ENCODE measurements at regions of chr5 and their contacts with region 1.

Region 1: DNA sequence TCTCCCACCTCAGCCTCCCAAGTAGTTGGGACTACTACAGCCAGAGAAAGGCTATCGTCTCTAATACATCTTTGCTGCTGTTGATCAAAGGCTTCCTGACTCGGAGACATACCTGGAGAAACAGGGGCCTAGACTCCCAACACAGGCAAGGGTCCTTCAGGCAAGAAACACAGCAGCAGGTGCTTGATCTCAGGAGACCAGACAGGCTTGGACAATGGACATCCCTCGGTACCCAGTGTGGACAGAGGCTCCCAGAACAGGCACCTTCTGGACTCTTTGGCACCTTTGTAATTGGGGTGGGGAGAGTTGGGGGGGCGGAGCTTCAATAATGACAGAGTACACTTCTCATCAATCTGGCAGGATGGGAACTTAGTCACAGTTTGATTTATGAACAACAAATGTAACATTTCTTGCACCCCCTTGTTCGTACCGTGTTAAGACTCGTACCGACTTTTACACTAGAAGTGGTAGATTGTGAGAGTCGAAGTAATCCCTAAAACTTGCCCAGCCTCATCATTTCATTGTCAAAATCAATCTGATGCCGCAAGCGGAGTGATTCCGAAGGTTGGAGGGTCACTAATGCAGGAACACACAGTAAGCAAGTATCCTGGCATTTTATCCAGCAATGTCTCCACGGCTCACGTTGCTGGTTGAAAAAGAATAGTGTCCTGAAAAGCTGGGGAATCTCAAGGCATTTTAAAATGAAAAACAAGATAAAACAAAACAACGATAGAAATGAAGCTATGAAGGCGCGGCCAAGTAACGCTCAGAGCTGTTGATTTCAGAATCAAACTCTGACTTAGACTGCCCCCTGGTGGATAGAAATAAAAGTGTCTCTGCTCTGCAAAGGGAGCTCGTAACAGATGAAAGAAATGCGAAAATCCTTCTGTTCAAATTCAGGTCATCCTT is 46.4 kb upstream of the STK32A start:
- DNase-seq: no peak
- H3K4me3 ChIP-seq: no peak overlapping the region
- CTCF ChIP-seq: peak; percentile 57

Region 2: DNA sequence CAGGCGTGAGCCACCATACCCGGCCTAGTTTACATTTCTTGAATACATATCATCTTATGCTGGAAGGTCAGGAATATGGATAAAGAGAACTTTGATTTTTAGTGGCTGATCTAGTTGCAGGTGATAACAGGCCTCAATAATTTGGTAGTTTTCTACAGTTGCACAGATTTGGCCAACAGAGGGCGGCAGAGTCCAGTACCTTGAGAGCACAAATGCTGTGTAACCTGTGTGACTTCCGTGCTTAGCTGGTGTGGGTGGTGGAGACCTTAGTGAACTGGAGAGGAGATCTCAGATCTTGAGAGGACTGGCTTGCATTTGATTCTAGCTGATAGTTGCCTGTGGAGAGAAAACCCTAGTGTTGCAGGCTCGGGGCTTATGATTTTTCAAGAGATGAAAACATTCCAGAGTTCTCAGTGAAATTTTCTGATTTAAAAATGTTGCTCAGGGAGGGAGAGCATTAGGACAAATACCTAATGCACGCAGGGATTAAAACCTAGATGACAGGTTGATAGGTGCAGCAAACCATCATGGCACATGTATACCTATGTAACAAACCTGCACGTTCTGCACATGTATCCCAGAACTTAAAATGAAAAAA is 655.1 kb before region 1 on chr5:
- CTCF ChIA-PET with region 1: interaction called, 125 read pairs
- POLR2A ChIA-PET with region 1: no interaction called
- DNase-seq: no peak
- H3K4me3 ChIP-seq: no peak overlapping the region
- CTCF ChIP-seq: peak; percentile 82

Region 3: DNA sequence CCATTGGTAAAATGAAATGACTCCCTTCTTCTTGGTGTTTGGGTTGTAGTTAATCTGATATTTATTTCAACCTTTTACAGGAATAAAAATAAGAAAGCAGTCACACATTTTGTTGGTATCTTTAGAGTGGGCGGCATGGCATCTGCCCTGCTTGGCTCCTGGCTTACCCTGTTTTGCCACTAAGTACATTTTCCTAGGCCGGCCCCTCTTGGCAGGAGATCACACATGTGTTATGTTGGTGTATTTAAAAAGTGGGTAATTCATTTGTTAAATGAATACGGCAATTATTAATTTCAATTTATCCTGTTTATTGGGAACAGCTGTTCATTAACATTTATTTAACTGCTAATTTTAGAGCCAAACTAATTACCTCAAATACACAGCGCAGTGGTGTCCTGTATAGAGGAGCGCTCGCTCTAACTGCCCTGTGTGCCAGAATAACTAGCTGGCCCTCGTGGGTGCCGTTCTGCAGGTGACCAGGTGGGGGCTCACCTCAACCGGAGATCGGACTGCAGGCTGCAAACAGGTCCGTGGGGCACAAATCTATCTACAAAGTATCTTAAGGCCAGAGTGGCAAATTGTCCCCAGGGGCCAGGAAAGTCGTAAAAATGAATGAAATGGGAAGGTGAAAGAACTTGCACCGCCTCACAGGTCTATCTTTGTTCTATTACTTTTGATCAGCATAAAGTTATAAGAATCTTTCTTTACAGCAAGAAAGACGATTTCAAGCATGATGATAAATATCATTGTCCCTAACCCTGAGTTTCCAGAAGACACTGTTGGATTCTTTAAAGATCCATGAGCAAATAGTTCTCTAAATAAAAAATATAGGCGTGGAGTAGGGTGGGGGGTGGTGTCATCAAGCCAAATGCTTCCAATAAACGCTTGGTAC is 646.2 kb before region 1 on chr5:
- CTCF ChIA-PET with region 1: interaction called, 50 read pairs
- POLR2A ChIA-PET with region 1: no interaction called
- DNase-seq: no peak
- H3K4me3 ChIP-seq: no peak overlapping the region
- CTCF ChIP-seq: peak; percentile 92

Region 4: GRCh38 chr5:147098233-147098790 is 90.1 kb before region 1 on chr5:
- CTCF ChIA-PET with region 1: interaction called, 155 read pairs
- POLR2A ChIA-PET with region 1: no interaction called
- DNase-seq: no peak
- H3K4me3 ChIP-seq: no peak overlapping the region
- CTCF ChIP-seq: peak; percentile 24

Region 5: DNA sequence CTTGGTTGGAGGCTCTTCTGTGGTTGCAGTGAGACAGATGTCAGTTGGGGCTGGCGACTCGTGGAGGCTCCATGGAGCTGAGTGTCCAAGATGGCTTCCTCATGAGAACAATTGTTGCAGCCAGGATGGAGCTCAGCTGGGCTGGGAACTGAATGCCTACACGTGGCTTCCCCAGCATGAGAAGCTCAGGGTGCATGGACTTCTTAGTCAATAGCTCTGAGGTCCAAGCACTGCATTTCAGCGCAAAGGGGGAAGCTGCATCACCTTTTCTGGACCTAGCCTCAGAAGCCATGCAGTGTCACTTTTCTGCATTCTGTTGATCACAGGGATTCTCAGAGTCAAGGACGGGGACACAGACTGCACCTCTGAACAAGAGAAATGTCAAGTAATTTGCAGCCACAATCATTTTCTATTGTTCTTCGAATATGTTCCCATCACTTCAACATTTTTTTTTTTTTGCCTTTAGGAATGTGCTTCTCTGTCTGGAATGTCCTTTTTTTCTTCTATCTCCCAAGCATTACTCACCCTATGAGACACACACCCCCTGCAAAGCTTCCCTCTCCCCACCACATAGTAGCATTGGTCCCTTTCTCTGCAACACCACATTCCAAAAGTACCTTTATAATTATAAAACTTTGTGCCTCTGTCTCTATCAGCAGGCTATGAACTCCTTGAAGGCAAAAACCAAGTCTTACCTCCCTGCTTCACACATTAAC is 11.2 kb before region 1 on chr5:
- CTCF ChIA-PET with region 1: interaction called, 61 read pairs
- POLR2A ChIA-PET with region 1: no interaction called
- DNase-seq: no peak
- H3K4me3 ChIP-seq: no peak overlapping the region
- CTCF ChIP-seq: no peak

Region 6: DNA sequence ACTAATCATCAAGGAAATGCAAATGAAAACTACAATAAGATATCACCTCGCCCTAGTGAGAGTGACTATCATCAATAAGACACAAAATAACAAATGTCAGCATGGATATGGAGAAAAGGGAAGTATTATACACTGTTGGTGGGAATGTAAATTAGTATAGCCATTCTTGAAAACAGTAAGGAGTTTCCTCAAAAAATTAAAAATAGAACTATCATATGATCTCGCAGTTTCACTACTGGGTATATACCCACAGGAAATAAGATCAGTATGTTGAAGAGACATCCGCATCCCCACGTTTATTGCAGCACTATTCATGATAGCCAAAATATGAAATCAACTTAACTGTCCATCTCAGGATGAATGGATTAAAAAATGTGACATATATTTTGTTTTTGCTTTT is 14.8 kb after region 1 on chr5:
- CTCF ChIA-PET with region 1: interaction called, 20 read pairs
- POLR2A ChIA-PET with region 1: no interaction called
- DNase-seq: no peak
- H3K4me3 ChIP-seq: no peak overlapping the region
- CTCF ChIP-seq: no peak

Region 7: GRCh38 chr5:147248561-147248960 is 60.1 kb after region 1 on chr5:
- CTCF ChIA-PET with region 1: no interaction called
- POLR2A ChIA-PET with region 1: no interaction called
- DNase-seq: no peak
- H3K4me3 ChIP-seq: no peak overlapping the region
- CTCF ChIP-seq: no peak

Region 8: DNA sequence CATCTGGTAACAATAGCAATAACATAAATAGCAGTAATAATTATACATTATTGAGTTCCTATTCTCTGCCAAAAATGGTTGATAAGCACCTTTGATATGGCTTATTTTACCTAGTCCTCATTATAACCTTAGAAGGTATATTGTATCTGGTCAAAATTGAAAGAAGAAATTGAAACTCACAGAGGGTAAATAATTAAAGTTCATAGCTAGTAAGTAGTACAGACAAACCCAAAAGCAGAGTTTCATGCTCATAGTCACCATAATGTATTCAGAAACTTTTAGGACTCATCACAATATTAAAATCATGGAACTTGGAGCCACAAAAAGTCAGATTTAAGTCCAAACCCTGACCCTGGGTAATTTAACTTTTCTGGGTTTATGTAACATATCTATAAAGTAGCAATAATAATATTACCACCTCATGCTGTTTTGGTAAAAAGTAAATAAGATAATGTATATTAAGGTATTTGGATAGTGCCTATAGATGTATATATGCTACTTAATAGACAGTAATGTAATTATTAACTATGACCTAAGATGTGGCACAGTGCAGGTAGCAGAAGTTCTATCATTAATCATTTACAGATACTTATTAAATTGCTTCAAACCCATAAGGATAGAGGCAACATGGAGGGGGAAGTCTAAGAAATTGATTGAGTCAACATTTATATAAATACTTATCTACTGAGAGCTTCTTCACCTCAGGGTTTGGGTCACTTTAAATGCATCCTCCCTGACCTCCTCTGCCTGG is 78.8 kb after region 1 on chr5:
- CTCF ChIA-PET with region 1: no interaction called
- POLR2A ChIA-PET with region 1: no interaction called
- DNase-seq: no peak
- H3K4me3 ChIP-seq: no peak overlapping the region
- CTCF ChIP-seq: no peak

Region 9: DNA sequence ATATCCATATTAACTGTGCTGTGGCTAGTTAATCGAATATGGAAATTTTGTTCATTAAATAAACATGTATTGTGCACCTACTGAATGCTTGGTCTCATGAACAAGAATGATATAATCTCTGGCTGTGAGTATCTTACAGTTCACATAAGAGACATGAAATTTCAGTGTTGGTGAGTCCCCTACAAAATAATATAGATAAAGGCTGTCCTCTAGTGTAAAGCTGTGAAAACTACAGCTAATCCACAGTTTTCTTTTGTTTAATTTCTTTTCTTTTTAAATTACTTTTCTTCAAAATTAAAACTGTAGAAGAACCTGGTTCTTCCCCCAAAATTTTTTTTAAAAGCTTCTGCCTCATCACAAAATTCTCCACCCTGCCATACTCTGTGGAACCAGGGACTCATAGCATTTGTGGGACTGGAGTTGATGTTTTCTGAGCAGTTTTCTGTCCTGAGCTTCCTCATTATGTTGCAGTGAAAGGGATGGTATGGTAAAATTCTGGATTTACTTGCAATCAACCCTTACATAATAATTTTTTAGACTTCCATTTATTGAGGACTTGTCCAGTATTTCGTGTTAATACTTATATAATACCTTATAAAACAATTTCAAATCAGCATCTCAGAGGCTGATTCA is 181.4 kb after region 1 on chr5:
- CTCF ChIA-PET with region 1: interaction called, 23 read pairs
- POLR2A ChIA-PET with region 1: no interaction called
- DNase-seq: no peak
- H3K4me3 ChIP-seq: no peak overlapping the region
- CTCF ChIP-seq: peak; percentile 22